ENCODE measurements at regions of chr16 and their contacts with region 1.

Region 1: DNA sequence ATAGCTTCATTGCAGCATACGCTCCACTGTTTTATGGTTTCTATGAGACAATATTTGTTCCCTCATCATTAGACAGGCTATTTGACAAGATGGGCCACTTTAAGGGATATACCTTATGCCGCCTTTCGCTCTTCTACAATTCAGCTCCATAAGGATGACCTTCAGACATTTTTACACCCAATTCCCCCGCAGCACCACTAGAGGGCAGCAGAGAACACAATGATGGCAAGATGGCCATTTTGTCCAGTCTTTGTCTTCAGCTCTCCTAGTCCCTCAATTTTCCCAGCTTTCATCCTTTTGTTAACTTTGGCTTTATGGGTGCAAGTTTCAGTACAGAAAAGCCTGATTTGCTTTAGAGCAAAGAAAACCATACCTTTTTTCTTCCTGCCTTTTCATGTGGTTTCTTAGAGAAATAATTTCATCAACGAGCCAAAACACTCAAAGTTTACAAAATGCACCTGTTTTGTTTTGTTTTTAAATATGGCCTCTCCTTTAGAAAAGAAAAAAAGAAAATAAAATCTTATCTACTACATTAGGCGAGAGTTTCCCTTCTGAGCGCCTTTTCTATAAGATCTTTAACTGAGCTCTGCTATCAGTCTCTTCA is 355.3 kb downstream of the TOX3 start:
- DNase-seq: peak; percentile 29 to 51
- ATAC-seq: peak in 2 of 8 donors; percentile 42 to 52
- H3K4me3 ChIP-seq: no peak overlapping the region
- H3K27ac ChIP-seq: no peak overlapping the region
- H3K4me1 ChIP-seq: no peaks in the 10 kb centered on the region
- H3K27me3 ChIP-seq: peaks cover 0 to 8% (median 0%) of the 10 kb centered on the region in 7 donors
- CTCF ChIP-seq: peak; percentile 77 to 92 (median 88)

Region 2: GRCh38 chr16:51538707-51539498 is 652.7 kb before region 1 on chr16:
- intact Hi-C with region 1: no loop called
- DNase-seq: no peak
- ATAC-seq: no peak
- H3K4me3 ChIP-seq: no peak overlapping the region
- H3K27ac ChIP-seq: no peak overlapping the region
- H3K4me1 ChIP-seq: no peaks in the 10 kb centered on the region
- H3K27me3 ChIP-seq: peaks cover 0 to 3% (median 0%) of the 10 kb centered on the region in 7 donors
- CTCF ChIP-seq: no peak

Region 3: GRCh38 chr16:52131206-52131605 is 60.4 kb before region 1 on chr16:
- intact Hi-C with region 1: no loop called
- DNase-seq: no peak
- ATAC-seq: no peak
- H3K4me3 ChIP-seq: no peak overlapping the region
- H3K27ac ChIP-seq: no peak overlapping the region
- H3K4me1 ChIP-seq: no peaks in the 10 kb centered on the region
- H3K27me3 ChIP-seq: peaks cover 0 to 5% (median 0%) of the 10 kb centered on the region in 7 donors
- CTCF ChIP-seq: no peak

Region 4: DNA sequence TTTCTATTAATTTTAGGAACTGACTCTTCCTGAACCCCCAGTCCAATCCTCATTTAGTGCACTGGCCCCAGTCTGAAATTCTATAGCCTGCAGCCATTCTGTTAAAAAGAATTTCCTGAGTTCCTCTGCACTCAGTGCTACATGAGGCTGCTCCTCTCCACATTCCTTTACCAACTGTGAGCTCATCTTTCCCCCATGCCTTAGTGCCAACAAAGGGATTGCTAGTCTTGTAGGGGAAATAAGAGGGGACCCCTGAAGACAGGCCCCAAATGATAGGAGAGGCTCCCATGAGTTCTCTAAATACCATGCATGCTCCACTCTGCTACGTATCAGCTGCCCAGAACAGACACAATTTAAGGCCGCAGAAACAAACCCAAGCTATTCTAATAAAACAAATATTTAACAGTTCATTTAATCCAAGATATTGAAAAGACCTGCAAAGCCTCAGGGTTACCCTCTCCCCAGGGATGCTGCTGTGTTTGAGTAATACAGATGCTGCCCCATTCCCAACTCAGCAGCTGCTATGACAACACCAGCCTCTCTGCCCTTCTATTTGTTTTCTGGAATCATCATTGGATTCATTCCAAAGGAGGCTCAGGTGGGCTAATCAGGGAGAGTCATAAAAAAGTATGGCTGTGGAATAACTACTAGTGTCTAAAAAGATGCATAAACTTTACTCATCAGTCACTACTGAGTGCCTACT is 126.8 kb after region 1 on chr16:
- intact Hi-C with region 1: no loop called
- DNase-seq: no peak
- ATAC-seq: no peak
- H3K4me3 ChIP-seq: no peak overlapping the region
- H3K27ac ChIP-seq: no peak overlapping the region
- H3K4me1 ChIP-seq: no peaks in the 10 kb centered on the region
- H3K27me3 ChIP-seq: no peaks in the 10 kb centered on the region
- CTCF ChIP-seq: no peak

Region 5: DNA sequence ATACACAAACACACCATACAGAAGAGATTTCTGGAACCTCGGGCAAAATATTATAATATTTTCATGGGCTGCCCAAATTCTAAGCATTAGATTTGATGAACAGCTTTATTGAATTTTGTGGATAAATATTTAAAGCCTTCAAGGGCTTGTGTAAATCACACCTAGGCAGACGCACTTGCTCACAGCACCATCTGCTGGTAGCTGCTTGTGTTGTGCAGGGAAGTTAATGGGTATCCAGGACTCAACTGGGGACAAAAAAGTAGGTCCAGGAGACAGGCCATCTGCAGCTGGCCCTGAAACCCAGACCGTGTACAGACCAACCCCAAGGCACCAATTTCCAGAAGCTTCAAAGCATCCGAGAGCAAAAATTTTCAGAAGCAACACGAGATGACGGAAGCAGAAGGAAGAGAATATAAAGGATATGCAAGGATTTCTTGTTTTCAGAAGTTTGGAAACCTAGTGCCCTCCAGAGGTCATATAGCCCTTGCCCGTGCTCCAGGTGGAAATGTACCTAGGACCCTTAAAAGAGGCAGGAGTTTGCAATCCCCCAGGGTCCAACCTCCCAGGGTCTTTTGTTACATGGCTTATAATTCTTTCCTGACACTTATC is 721.0 kb after region 1 on chr16:
- intact Hi-C with region 1: loop called (anchors 2 to 10 kb)
- DNase-seq: peak; percentile 33 to 38
- ATAC-seq: peak in 4 of 8 donors; percentile 37 to 61 (median 53)
- H3K4me3 ChIP-seq: no peak overlapping the region
- H3K27ac ChIP-seq: no peak overlapping the region
- H3K4me1 ChIP-seq: no peaks in the 10 kb centered on the region
- H3K27me3 ChIP-seq: peaks cover 0 to 5% (median 0%) of the 10 kb centered on the region in 7 donors
- CTCF ChIP-seq: peak; percentile 52 to 77 (median 73)

Region 6: GRCh38 chr16:53022374-53022773 is 830.7 kb after region 1 on chr16:
- intact Hi-C with region 1: loop called in 8 of 10 experiments (anchors 2 to 10 kb)
- DNase-seq: peak in 1 of 2 donors; percentile 40
- ATAC-seq: peak in 6 of 8 donors; percentile 55 to 77 (median 60)
- H3K4me3 ChIP-seq: no peak overlapping the region
- H3K27ac ChIP-seq: no peak overlapping the region
- H3K4me1 ChIP-seq: no peaks in the 10 kb centered on the region
- H3K27me3 ChIP-seq: no peaks in the 10 kb centered on the region
- CTCF ChIP-seq: peak; percentile 26 to 69 (median 58)